ENCODE measurements at regions of chr7 and their contacts with region 1.

Region 1: GRCh38 chr7:5704534-5704922 is 76.9 kb downstream of the RNF216 start:
- DNase-seq: peak; percentile 47 to 79 (median 73)
- ATAC-seq: peak; percentile 42
- H3K4me3 ChIP-seq: no peak overlapping the region
- H3K4me3 Mint-ChIP-seq: no peak overlapping the region
- H3K27ac ChIP-seq: no peak overlapping the region
- H3K27ac Mint-ChIP-seq: peak overlapping the region in 5 of 9 donors; percentile 0 to 67 (median 5)
- H3K4me1 ChIP-seq: peaks cover 18 to 28% of the 10 kb centered on the region in 2 donors
- H3K4me1 Mint-ChIP-seq: peaks cover 28 to 43% (median 36%) of the 10 kb centered on the region in 7 donors
- H3K27me3 ChIP-seq: no peaks in the 10 kb centered on the region
- H3K27me3 Mint-ChIP-seq: peaks cover 0 to under 1% (median 0%) of the 10 kb centered on the region in 5 donors

Region 2: DNA sequence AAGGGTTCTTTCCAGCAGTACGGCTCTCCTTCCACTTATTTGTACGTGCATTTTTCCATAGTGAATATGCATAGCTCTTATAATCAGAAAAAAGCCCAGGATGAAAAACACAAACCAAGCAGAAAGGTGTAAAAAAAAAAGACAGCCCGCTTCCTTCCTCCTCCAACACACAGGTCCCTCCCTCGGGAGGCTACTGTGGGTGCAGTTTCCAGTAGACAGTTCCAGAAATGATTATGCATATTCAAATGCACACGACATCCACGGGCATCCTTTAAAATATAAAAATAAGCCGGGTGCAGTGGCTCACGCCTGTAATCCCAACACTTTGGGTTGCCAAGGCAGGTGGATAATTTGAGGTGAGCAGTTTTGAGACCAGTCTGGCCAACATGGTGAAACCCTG is 340.8 kb before region 1 on chr7:
- CTCF ChIA-PET with region 1: interaction called, 5 read pairs
- POLR2A ChIA-PET with region 1: no interaction called
- intact Hi-C with region 1: loop called in 1 of 2 experiments (anchors 10 kb)
- DNase-seq: no peak
- ATAC-seq: no peak
- H3K4me3 ChIP-seq: no peak overlapping the region
- H3K4me3 Mint-ChIP-seq: peak overlapping the region in 1 of 10 donors; percentile 8
- H3K27ac ChIP-seq: no peak overlapping the region
- H3K27ac Mint-ChIP-seq: peak overlapping the region in 2 of 9 donors; percentile 51 to 53
- H3K4me1 ChIP-seq: peaks cover 0 to 5% of the 10 kb centered on the region in 2 donors
- H3K4me1 Mint-ChIP-seq: peaks cover 5 to 20% (median 11%) of the 10 kb centered on the region in 7 donors
- H3K27me3 ChIP-seq: no peaks in the 10 kb centered on the region
- H3K27me3 Mint-ChIP-seq: no peaks in the 10 kb centered on the region

Region 3: GRCh38 chr7:5557920-5558401 is 146.6 kb before region 1 on chr7:
- CTCF ChIA-PET with region 1: interaction called, 14 read pairs
- POLR2A ChIA-PET with region 1: interaction called, 4 read pairs
- intact Hi-C with region 1: no loop called
- DNase-seq: peak in 3 of 9 donors; percentile 14 to 41 (median 23)
- ATAC-seq: no peak
- H3K4me3 ChIP-seq: peak overlapping the region; percentile 57
- H3K4me3 Mint-ChIP-seq: peak overlapping the region; percentile 82 to 91 (median 88)
- H3K27ac ChIP-seq: peak overlapping the region; percentile 85
- H3K27ac Mint-ChIP-seq: peak overlapping the region; percentile 78 to 97 (median 93)
- H3K4me1 ChIP-seq: peaks cover 39 to 47% of the 10 kb centered on the region in 2 donors
- H3K4me1 Mint-ChIP-seq: peaks cover 19 to 48% (median 41%) of the 10 kb centered on the region in 7 donors
- H3K27me3 ChIP-seq: peaks cover 0 to 4% of the 10 kb centered on the region in 2 donors
- H3K27me3 Mint-ChIP-seq: peaks cover 0 to 13% (median 0%) of the 10 kb centered on the region in 5 donors

Region 4: DNA sequence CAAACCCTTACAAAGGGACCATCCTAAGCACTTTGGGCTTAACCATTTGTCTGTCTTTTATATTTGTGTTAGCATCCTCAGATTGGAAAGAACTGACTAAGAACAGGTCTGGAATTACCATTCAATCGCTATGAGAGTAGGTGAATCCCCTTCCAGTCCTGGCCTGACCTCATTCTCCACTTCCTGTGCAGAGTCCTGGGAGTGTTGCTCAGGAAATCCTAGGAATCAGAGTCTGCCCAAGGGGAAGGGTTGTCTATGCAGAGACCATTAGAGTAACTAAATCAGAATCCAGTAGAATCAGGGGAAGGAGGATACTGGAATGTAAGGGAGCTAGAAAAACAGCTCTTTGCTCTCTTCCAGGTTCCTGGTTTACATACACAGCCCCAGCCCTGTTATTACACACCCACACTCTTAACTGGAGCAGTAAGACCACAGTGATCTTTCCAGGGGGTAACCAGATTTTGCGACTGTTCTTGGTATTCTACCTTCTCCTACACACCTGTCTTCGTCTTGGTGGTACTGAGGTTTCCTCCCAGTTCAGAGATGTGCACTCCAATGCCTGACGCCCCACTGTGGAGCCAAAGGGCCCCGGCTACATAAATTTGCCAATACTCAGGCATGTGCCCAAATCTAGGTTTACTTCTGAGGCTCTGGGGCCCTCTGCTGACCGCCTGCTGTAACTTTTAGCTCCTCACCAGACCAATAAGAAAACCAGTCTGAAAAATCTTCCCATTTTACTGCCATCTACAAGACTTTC is 26.8 kb before region 1 on chr7:
- CTCF ChIA-PET with region 1: interaction called, 6 read pairs
- POLR2A ChIA-PET with region 1: interaction called, 177 read pairs
- intact Hi-C with region 1: loop called in 1 of 2 experiments (anchors 2 kb)
- DNase-seq: peak in 3 of 9 donors; percentile 34 to 47 (median 42)
- ATAC-seq: peak; percentile 67
- H3K4me3 ChIP-seq: no peak overlapping the region
- H3K4me3 Mint-ChIP-seq: peak overlapping the region in 1 of 10 donors; percentile 1
- H3K27ac ChIP-seq: no peak overlapping the region
- H3K27ac Mint-ChIP-seq: peak overlapping the region in 7 of 9 donors; percentile 2 to 68 (median 34)
- H3K4me1 ChIP-seq: peaks cover 5 to 14% of the 10 kb centered on the region in 2 donors
- H3K4me1 Mint-ChIP-seq: peaks cover 40 to 68% (median 57%) of the 10 kb centered on the region in 7 donors
- H3K27me3 ChIP-seq: no peaks in the 10 kb centered on the region
- H3K27me3 Mint-ChIP-seq: no peaks in the 10 kb centered on the region

Region 5: DNA sequence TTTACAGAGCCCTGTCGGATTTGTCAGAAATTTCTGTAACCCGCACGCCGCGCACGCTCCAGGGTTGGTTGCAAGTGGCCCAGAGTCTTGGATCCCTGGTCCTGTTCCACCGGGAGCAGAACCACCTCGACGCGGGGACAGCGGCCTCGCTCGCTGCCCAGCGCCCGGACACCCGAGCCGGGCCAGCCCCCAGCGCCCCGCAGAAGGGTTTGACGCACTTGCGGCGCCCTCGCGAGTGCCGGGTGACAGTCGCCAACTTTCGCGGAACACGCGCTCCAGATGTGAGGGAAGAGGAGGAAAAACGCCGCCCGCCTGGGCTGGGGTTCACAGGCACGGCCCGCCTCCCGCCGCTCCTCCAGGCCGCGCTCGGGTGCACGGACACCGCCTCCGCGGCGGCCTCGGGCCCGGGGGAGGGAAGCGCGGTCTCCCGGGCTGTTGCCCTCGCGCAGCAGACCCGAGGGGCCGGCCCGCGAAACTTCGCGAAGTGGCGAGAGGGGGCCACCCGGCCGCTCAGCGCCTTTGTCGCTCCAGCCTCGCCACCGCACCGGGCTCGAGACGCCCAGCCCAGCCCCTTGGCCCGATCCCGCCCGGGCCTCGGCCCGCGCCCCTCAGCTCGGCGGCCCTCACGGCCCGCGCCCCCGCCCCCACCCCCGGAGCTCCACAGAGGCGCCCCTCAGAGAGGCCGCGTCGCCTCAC is 76.4 kb after region 1 on chr7:
- CTCF ChIA-PET with region 1: no interaction called
- POLR2A ChIA-PET with region 1: no interaction called
- intact Hi-C with region 1: loop called in 1 of 2 experiments (anchors 2 kb)
- DNase-seq: peak in 7 of 9 donors; percentile 12 to 60 (median 30)
- ATAC-seq: peak; percentile 35
- H3K4me3 ChIP-seq: peak overlapping the region; percentile 66
- H3K4me3 Mint-ChIP-seq: peak overlapping the region; percentile 72 to 92 (median 84)
- H3K27ac ChIP-seq: peak overlapping the region; percentile 92
- H3K27ac Mint-ChIP-seq: peak overlapping the region; percentile 66 to 93 (median 88)
- H3K4me1 ChIP-seq: peaks cover 24 to 25% of the 10 kb centered on the region in 2 donors
- H3K4me1 Mint-ChIP-seq: peaks cover 28 to 47% (median 42%) of the 10 kb centered on the region in 7 donors
- H3K27me3 ChIP-seq: no peaks in the 10 kb centered on the region
- H3K27me3 Mint-ChIP-seq: no peaks in the 10 kb centered on the region

Region 6: DNA sequence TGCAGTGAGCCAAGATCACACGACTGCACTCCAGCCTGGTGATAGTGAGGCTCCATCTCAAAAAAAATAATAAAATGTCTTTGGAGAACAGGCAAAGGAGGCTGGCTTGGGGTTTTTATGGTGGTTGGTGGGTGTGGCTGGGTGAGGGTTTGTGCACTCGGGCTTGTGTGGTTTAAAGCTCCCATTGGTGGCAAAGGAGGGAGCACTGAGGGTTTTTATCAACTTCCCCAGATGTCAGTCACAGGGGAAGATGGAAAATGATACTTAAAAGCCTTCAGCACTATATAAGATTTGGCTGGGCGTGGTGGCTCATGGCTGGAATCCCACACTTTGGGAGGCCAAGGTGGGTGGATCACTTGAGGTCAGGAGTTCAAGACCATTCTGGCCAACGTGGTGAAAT is 93.2 kb after region 1 on chr7:
- CTCF ChIA-PET with region 1: no interaction called
- POLR2A ChIA-PET with region 1: no interaction called
- intact Hi-C with region 1: no loop called
- DNase-seq: no peak
- ATAC-seq: peak; percentile 40
- H3K4me3 ChIP-seq: no peak overlapping the region
- H3K4me3 Mint-ChIP-seq: peak overlapping the region in 1 of 10 donors; percentile 27
- H3K27ac ChIP-seq: no peak overlapping the region
- H3K27ac Mint-ChIP-seq: peak overlapping the region in 6 of 9 donors; percentile 17 to 55 (median 48)
- H3K4me1 ChIP-seq: no peaks in the 10 kb centered on the region
- H3K4me1 Mint-ChIP-seq: peaks cover 0 to 8% (median 5%) of the 10 kb centered on the region in 7 donors
- H3K27me3 ChIP-seq: no peaks in the 10 kb centered on the region
- H3K27me3 Mint-ChIP-seq: peaks cover 0 to 2% (median 0%) of the 10 kb centered on the region in 5 donors

Region 7: DNA sequence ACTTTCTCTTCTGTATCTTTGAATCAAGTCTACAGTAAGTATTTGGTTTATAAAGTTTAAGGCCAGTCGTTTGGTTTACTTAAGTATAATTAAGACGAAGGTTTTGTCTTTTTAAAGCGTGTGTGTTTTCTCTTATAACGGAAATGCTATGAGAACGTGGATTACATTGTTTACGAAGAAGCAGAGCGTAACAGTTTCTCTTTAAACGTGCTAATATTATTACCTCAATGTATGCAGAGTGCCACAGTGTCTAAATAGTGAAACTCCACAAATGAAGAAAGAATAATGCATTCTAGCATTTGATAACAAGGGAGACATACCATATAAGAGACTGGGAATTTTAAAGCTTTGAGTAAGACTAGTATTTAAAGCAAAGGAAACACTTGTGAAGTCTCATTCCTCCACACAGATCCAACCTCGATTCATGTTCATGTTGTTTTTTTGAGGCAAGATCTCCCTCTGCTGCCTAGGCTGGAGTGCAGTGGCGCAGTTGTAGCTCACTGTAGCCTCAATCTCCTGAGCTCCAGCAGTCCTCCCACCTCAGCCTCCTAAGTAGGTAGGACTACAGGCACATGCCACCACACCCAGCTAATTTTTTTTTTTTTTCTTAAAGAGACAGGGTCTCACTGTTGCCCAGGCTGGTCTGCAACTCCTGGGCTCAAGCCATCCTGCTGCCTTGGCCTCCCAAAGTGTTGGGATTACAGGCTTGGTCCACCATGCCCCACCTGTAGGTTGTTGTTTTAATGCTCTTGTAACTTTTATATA is 401.8 kb after region 1 on chr7:
- CTCF ChIA-PET with region 1: no interaction called
- POLR2A ChIA-PET with region 1: no interaction called
- intact Hi-C with region 1: no loop called
- DNase-seq: peak in 7 of 9 donors; percentile 27 to 57 (median 51)
- ATAC-seq: no peak
- H3K4me3 ChIP-seq: peak overlapping the region; percentile 76
- H3K4me3 Mint-ChIP-seq: peak overlapping the region; percentile 84 to 96 (median 92)
- H3K27ac ChIP-seq: peak overlapping the region; percentile 90
- H3K27ac Mint-ChIP-seq: peak overlapping the region; percentile 87 to 97 (median 93)
- H3K4me1 ChIP-seq: peaks cover 7 to 9% of the 10 kb centered on the region in 2 donors
- H3K4me1 Mint-ChIP-seq: peaks cover 23 to 49% (median 41%) of the 10 kb centered on the region in 7 donors
- H3K27me3 ChIP-seq: no peaks in the 10 kb centered on the region
- H3K27me3 Mint-ChIP-seq: no peaks in the 10 kb centered on the region

Measured in naive thymus-derived CD4-positive, alpha-beta T cell (primary cell).